Prostate gland (tissue), 2 donors: ENCODE measurements at regions of chr2 and their contacts with region 1.

Region 1: GRCh38 chr2:207625018-207625907 is at the start of gene METTL21A:
- DNase-seq: peak; percentile 83
- H3K4me3 ChIP-seq: peak within 1 kb of the TSS; percentile 84 to 92
- H3K27ac ChIP-seq: peak within 1 kb of the TSS; percentile 95 to 96
- H3K4me1 ChIP-seq: no peaks in the 10 kb centered on the region
- H3K27me3 ChIP-seq: no peaks in the 10 kb centered on the region
- CTCF ChIP-seq: peak; percentile 7 to 64 (median 31)
- POLR2A ChIP-seq: peak; percentile 84
- total RNA-seq, gene METTL21A: 5.2 to 15.5 TPM

Region 2: GRCh38 chr2:207529330-207530159 is 95.7 kb before region 1 on chr2 and contains the start of gene CREB1:
- intact Hi-C with region 1: loop called (anchors 1 kb)
- DNase-seq: peak; percentile 98
- H3K4me3 ChIP-seq: peak within 1 kb of the TSS; percentile 66 to 78
- H3K27ac ChIP-seq: peak within 1 kb of the TSS; percentile 96 to 97
- H3K4me1 ChIP-seq: peaks cover 6% of the 10 kb centered on the region
- H3K27me3 ChIP-seq: no peaks in the 10 kb centered on the region
- CTCF ChIP-seq: peak in 2 of 4 experiments; percentile 26 to 46
- POLR2A ChIP-seq: peak; percentile 90
- total RNA-seq, gene CREB1: 44.0 to 47.1 TPM

Region 3: DNA sequence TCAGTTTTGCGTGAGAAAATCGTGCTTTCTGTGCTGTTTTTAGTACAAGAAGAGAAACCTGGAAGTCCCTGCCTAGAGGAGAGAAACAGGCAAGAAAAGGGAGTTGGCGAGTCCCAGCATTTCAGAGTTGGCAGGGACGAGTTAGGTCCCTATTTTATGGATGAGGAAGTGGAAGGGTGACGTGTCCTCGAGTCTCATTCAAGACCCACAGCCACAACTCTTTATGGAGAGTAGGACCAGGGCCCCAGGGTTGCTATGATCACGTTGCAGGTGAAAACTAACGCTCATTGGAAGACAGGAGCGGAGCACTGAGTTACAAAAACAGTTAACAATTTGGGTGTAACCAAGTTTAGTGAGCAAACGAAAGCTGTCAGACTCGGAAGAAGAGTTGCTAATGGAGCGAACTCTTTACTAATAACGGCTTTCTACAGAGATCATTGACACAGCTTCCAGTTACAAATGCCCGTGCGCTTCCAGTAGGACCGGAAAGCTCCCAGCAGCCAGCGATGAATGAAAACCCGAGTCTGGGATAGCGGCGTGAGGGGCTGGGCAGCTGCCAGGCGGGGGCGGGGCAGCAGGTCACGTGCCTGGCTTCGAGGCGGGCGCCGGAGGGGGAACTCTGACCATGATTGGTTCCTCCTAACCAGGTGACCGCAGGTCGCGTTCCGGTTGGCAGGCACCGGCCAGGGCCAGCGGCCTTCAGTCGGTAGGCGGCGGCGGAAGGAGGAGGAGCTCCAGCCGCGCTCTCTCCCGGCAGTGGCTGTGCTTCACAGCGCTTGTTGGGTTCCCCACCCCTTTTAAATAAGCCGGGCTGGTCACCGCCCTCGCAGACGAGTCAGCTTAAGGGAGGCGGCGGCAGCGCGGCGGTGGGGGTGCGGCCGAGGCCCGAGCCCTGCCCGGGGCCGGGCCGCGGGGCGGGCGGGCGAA is 85.8 kb after region 1 on chr2 and contains the start of gene CCNYL1:
- intact Hi-C with region 1: loop called (anchors 5 kb)
- DNase-seq: peak; percentile 99
- H3K4me3 ChIP-seq: peak within 1 kb of the TSS; percentile 84 to 95
- H3K27ac ChIP-seq: peak within 1 kb of the TSS; percentile 84 to 87
- H3K4me1 ChIP-seq: no peaks in the 10 kb centered on the region
- H3K27me3 ChIP-seq: no peaks in the 10 kb centered on the region
- CTCF ChIP-seq: peak in 3 of 4 experiments; percentile 37 to 94 (median 72)
- POLR2A ChIP-seq: peak; percentile 95
- total RNA-seq, gene CCNYL1: 5.7 to 9.7 TPM